Transverse colon (tissue), 4 donors: ENCODE measurements at regions of chr9 and their contacts with region 1.

Region 1: DNA sequence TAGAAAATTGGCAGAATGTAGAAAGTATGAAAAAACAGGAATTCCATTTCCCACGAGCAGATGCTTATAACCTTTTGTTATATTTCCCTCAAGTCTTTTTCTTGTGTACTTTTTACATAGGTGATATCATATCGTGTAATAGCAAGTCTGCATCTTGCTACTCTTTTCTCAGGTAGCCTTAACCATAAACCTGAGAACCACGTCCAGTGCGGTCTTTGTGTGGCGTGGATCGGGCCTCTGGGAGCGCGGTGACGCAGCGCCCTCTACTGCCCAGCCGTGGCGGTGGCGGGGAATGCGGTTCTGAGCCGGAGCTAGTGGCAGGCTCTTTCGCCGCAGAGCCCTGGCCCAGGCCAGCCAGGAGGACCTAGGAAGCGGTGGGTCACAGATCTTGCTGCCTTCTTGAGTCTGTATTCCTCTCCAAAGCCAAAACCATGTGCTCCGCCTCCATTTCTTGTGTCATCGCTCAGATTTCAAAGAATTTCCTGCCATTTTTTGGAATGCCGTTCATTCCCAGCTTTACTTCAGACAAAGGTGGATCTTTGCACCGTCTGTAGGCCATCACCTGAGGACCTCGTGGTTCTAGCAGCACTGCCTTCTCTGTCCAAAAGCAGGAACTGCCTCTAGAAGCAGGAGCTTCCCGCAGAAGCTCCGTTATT is 71.9 kb downstream of the MVB12B start:
- DNase-seq: peak; percentile 87
- H3K4me3 ChIP-seq: no peak overlapping the region
- H3K27ac ChIP-seq: no peak overlapping the region
- H3K4me1 ChIP-seq: peaks cover 0 to 20% (median 0%) of the 10 kb centered on the region in 4 donors
- H3K27me3 ChIP-seq: no peaks in the 10 kb centered on the region
- CTCF ChIP-seq: peak; percentile 95 to 98 (median 96)
- EP300 ChIP-seq: no peak
- POLR2A ChIP-seq: no peak

Region 2: GRCh38 chr9:126301985-126302603 is 96.4 kb before region 1 on chr9:
- in situ Hi-C with region 1: loop called in 2 of 4 experiments (anchors 5 to 10 kb)
- intact Hi-C with region 1: loop called (anchors 2 kb)
- DNase-seq: peak; percentile 70
- H3K4me3 ChIP-seq: no peak overlapping the region
- H3K27ac ChIP-seq: no peak overlapping the region
- H3K4me1 ChIP-seq: peaks cover 0 to 19% (median 14%) of the 10 kb centered on the region in 4 donors
- H3K27me3 ChIP-seq: no peaks in the 10 kb centered on the region
- CTCF ChIP-seq: peak; percentile 65 to 82 (median 70)
- EP300 ChIP-seq: no peak
- POLR2A ChIP-seq: no peak

Region 3: GRCh38 chr9:126309427-126310189 is 88.9 kb before region 1 on chr9:
- in situ Hi-C with region 1: loop called in 3 of 4 experiments (anchors 5 to 10 kb)
- intact Hi-C with region 1: no loop called
- DNase-seq: no peak
- H3K4me3 ChIP-seq: no peak overlapping the region
- H3K27ac ChIP-seq: no peak overlapping the region
- H3K4me1 ChIP-seq: no peaks in the 10 kb centered on the region
- H3K27me3 ChIP-seq: no peaks in the 10 kb centered on the region
- CTCF ChIP-seq: no peak
- EP300 ChIP-seq: no peak
- POLR2A ChIP-seq: no peak